Psoas muscle (tissue), 8 donors: ENCODE measurements at regions of chr15 and their contacts with region 1.

Region 1: GRCh38 chr15:41811432-41812195 is 16.3 kb upstream of the JMJD7 start:
- DNase-seq: peak; percentile 86 to 91
- ATAC-seq: peak; percentile 95 to 99 (median 98)
- H3K4me3 ChIP-seq: no peak overlapping the region
- H3K27ac ChIP-seq: no peak overlapping the region
- H3K4me1 ChIP-seq: no peaks in the 10 kb centered on the region
- H3K27me3 ChIP-seq: no peaks in the 10 kb centered on the region
- CTCF ChIP-seq: peak; percentile 92

Region 2: DNA sequence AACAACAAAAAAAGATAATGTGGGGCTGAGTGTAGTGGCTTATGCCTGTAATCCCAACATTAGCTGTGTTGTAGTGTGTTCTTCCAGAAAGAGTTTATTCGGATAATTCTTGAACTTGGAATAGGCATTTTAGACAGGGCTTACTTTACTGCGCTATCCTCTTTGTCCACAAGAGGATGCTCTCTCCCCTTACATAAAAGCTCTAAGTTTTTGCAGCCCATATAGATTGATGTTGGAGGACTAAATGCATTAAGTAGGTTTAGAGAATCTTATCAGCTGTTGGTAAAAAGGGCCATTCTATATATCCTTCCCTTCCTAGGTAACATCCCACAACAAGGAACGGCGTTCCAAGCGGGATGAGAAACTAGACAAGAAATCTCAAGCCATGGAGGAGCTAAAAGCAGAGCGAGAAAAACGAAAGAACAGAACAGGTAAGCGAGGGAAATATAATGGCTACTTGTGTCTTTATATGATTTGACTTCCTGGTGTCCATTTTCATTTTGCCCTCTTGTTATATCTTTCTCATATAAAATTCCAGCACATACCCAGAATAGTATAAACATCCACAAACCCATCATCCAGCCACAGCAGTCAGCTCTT is 345.7 kb before region 1 on chr15:
- intact Hi-C with region 1: loop called in 1 of 2 experiments (anchors 5 kb)
- DNase-seq: no peak
- ATAC-seq: no peak
- H3K4me3 ChIP-seq: no peak overlapping the region
- H3K27ac ChIP-seq: no peak overlapping the region
- H3K4me1 ChIP-seq: no peaks in the 10 kb centered on the region
- H3K27me3 ChIP-seq: no peaks in the 10 kb centered on the region
- CTCF ChIP-seq: peak; percentile 67

Region 3: DNA sequence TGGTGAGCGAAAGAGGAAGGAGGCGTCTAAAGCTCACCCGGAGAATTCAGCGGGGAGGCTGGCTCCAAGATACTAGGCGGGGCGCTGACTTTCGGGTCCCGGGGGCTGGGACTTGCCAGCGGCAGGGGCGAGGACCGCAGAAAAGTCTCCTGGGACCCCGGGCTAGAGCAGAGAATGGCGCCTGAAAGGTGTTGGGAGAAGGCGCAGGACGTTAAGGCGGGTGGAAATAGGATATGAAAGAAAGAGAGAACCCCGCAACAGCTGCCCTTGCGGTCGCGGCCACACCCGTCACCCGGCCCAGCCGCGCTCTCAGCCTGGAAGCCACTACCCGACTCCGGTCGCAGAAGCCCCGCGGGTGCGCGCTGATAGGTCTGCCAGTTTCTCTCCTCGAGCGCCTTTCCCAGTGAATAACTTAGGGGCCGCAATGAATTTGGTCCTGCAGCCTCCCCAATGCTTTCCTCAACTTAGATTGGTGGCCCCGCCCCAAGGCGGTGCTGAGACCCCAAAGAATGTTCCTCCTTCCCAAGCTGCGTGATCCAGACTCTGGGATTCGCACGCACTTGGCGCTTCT is 298.6 kb before region 1 on chr15:
- intact Hi-C with region 1: no loop called
- DNase-seq: no peak
- ATAC-seq: peak; percentile 59 to 81 (median 72)
- H3K4me3 ChIP-seq: peak overlapping the region; percentile 54
- H3K27ac ChIP-seq: no peak overlapping the region
- H3K4me1 ChIP-seq: peaks cover 22% of the 10 kb centered on the region
- H3K27me3 ChIP-seq: peaks cover 0 to 34% (median 26%) of the 10 kb centered on the region in 3 donors
- CTCF ChIP-seq: no peak

Region 4: DNA sequence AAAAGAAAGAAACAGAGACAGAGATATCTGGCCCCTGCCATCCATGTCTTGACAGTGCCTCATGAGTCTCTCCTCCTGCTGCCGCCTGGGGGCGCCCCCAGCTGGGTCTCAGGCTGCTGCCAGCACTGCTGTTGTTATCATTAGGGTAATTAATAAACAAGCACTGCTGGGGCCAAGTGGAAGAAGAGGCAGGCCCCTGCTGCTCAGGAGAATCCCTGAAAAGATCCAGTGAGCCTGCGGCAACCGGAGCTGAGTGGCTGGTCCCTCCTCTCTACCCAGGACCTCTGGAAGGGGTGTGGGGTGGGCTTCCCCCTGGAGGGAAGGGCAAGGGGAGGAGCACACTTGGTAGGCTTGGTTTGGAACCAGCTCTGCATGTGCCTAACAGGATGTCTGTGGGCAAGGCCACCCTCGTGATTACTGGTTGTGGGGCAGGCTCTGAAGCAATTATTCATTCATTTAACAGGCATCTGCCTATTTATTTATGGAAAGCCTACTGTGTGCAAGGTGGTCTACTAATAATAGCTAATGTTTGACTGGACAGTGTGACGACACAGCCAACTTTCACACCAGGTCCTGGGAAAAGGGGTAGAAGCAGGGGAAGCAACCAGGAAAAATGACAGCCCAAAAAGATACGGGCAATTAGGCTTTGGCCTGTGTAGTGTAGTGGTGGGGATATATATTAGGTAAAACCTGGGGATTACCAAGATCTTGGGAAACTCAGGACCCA is 253.8 kb before region 1 on chr15:
- intact Hi-C with region 1: loop called in 1 of 2 experiments (anchors 5 kb)
- DNase-seq: peak; percentile 61 to 66
- ATAC-seq: peak; percentile 31 to 63 (median 54)
- H3K4me3 ChIP-seq: peak overlapping the region; percentile 68
- H3K27ac ChIP-seq: no peak overlapping the region
- H3K4me1 ChIP-seq: peaks cover 6% of the 10 kb centered on the region
- H3K27me3 ChIP-seq: no peaks in the 10 kb centered on the region
- CTCF ChIP-seq: peak; percentile 60

Region 5: GRCh38 chr15:41774062-41774881 is 37.3 kb before region 1 on chr15 and contains the start of gene MAPKBP1:
- intact Hi-C with region 1: loop called (anchors 1 to 2 kb)
- DNase-seq: peak; percentile 98 to 99
- ATAC-seq: peak; percentile 95 to 98 (median 98)
- H3K4me3 ChIP-seq: peak within 1 kb of the TSS; percentile 90
- H3K27ac ChIP-seq: peak within 1 kb of the TSS; percentile 86
- H3K4me1 ChIP-seq: peaks cover 35% of the 10 kb centered on the region
- H3K27me3 ChIP-seq: no peaks in the 10 kb centered on the region
- CTCF ChIP-seq: peak; percentile 57
- total RNA-seq, gene MAPKBP1: 7.1 to 10.3 (median 8.1) TPM